Naive thymus-derived CD4-positive, alpha-beta T cell (primary cell): ENCODE measurements at regions of chr12 and their contacts with region 1.

Region 1: GRCh38 chr12:101876861-101877815 is at the start of gene DRAM1:
- DNase-seq: peak; percentile 45 to 85 (median 61)
- ATAC-seq: peak; percentile 93
- H3K4me3 ChIP-seq: peak within 1 kb of the TSS; percentile 56
- H3K4me3 Mint-ChIP-seq: peak within 1 kb of the TSS; percentile 80 to 95 (median 92)
- H3K27ac ChIP-seq: peak within 1 kb of the TSS; percentile 78
- H3K27ac Mint-ChIP-seq: peak within 1 kb of the TSS; percentile 73 to 90 (median 84)
- H3K4me1 ChIP-seq: peaks cover 0 to 6% of the 10 kb centered on the region in 2 donors
- H3K4me1 Mint-ChIP-seq: peaks cover 8 to 18% (median 12%) of the 10 kb centered on the region in 7 donors
- H3K27me3 ChIP-seq: no peaks in the 10 kb centered on the region
- H3K27me3 Mint-ChIP-seq: peaks cover 0 to 4% (median 0%) of the 10 kb centered on the region in 5 donors
- total RNA-seq, gene DRAM1: 2.4 to 9.5 (median 2.6) TPM

Region 2: GRCh38 chr12:101280006-101280505 is 597.1 kb before region 1 on chr12 and contains the start of gene UTP20:
- CTCF ChIA-PET with region 1: no interaction called
- POLR2A ChIA-PET with region 1: no interaction called
- intact Hi-C with region 1: loop called in 1 of 2 experiments (anchors 5 kb)
- DNase-seq: peak; percentile 90 to 94 (median 92)
- ATAC-seq: peak; percentile 100
- H3K4me3 ChIP-seq: peak within 1 kb of the TSS; percentile 72
- H3K4me3 Mint-ChIP-seq: peak within 1 kb of the TSS; percentile 92 to 97 (median 96)
- H3K27ac ChIP-seq: peak within 1 kb of the TSS; percentile 63
- H3K27ac Mint-ChIP-seq: peak within 1 kb of the TSS; percentile 77 to 94 (median 87)
- H3K4me1 ChIP-seq: peaks cover 5% of the 10 kb centered on the region in 2 donors
- H3K4me1 Mint-ChIP-seq: peaks cover 11 to 28% (median 16%) of the 10 kb centered on the region in 7 donors
- H3K27me3 ChIP-seq: no peaks in the 10 kb centered on the region
- H3K27me3 Mint-ChIP-seq: peaks cover 8 to 24% (median 16%) of the 10 kb centered on the region in 5 donors
- total RNA-seq, gene UTP20: 10.8 to 20.8 (median 14.9) TPM

Region 3: GRCh38 chr12:101407436-101408345 is 469.4 kb before region 1 on chr12 and contains the start of gene ARL1:
- CTCF ChIA-PET with region 1: no interaction called
- POLR2A ChIA-PET with region 1: no interaction called
- intact Hi-C with region 1: loop called in 1 of 2 experiments (anchors 2 kb)
- DNase-seq: peak; percentile 41 to 85 (median 65)
- ATAC-seq: peak; percentile 88
- H3K4me3 ChIP-seq: peak within 1 kb of the TSS; percentile 97
- H3K4me3 Mint-ChIP-seq: peak within 1 kb of the TSS; percentile 92 to 99 (median 98)
- H3K27ac ChIP-seq: peak within 1 kb of the TSS; percentile 85
- H3K27ac Mint-ChIP-seq: peak within 1 kb of the TSS; percentile 82 to 98 (median 95)
- H3K4me1 ChIP-seq: peaks cover 0 to 15% of the 10 kb centered on the region in 2 donors
- H3K4me1 Mint-ChIP-seq: peaks cover 16 to 45% (median 30%) of the 10 kb centered on the region in 7 donors
- H3K27me3 ChIP-seq: no peaks in the 10 kb centered on the region
- H3K27me3 Mint-ChIP-seq: peaks cover 0 to 11% (median 2%) of the 10 kb centered on the region in 5 donors
- total RNA-seq, gene ARL1: 26.2 to 48.4 (median 39.3) TPM

Region 4: DNA sequence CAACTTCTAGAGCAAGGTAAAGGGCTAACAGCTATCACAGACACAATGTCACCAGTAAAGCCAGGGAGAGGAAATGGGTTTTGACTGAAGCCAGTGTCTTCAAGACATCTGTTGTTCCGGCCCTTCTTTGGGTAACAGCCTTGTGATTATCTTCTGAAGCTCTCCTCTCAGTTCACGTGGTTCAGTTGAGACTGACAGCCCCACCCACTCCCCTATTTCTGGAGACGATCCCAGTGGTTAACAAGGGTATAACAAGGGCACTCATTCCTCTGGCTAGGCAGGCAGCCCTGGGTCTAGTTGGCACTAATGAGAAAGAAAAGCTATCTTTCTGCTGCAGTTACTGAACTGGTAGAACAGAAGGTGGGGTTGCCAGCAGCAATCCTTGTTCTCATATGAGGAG is 53.2 kb before region 1 on chr12:
- CTCF ChIA-PET with region 1: no interaction called
- POLR2A ChIA-PET with region 1: no interaction called
- intact Hi-C with region 1: no loop called
- DNase-seq: peak; percentile 28 to 87 (median 82)
- ATAC-seq: peak; percentile 100
- H3K4me3 ChIP-seq: no peak overlapping the region
- H3K4me3 Mint-ChIP-seq: peak overlapping the region; percentile 15 to 84 (median 64)
- H3K27ac ChIP-seq: no peak overlapping the region
- H3K27ac Mint-ChIP-seq: peak overlapping the region; percentile 33 to 97 (median 85)
- H3K4me1 ChIP-seq: peaks cover 5 to 24% of the 10 kb centered on the region in 2 donors
- H3K4me1 Mint-ChIP-seq: peaks cover 41 to 81% (median 78%) of the 10 kb centered on the region in 7 donors
- H3K27me3 ChIP-seq: no peaks in the 10 kb centered on the region
- H3K27me3 Mint-ChIP-seq: no peaks in the 10 kb centered on the region